Activated CD4-positive, alpha-beta T cell treated with anti-CD3 and anti-CD28 coated beads for 36 hours (primary cell): ENCODE measurements at regions of chr7 and their contacts with region 1.

Region 1: DNA sequence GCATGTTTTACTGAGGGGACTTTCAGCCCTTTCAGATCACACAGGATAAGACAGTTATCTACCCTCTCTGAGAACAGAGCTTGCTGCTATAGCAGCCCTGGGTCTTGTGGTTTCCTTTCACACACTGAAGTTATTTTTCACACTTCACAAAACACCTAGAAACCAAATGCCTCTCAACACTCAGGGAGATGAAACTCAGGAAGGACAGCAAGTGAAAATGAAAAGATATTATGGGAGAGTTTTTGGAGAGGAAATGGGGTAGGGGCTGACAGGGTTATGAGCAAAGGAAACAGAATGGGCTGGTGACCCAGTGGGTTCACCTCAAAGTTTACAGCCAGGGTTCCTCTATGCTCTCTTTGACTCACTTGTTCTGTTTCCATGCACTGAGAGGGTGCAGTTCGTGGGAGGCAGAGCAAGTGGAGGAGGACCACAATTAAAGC is 17.0 kb upstream of the GIMAP2 start:
- DNase-seq: peak; percentile 77
- ATAC-seq: peak; percentile 76
- H3K4me3 Mint-ChIP-seq: peak overlapping the region; percentile 28
- H3K27ac Mint-ChIP-seq: peak overlapping the region; percentile 94
- H3K4me1 Mint-ChIP-seq: peaks cover 89% of the 10 kb centered on the region
- H3K27me3 Mint-ChIP-seq: no peaks in the 10 kb centered on the region

Region 2: GRCh38 chr7:150567169-150567568 is 101.3 kb before region 1 on chr7 and contains the start of gene GIMAP4:
- CTCF ChIA-PET with region 1: interaction called, 4 read pairs
- POLR2A ChIA-PET with region 1: interaction called, 4 read pairs
- intact Hi-C with region 1: loop called in 1 of 2 experiments (anchors 5 kb)
- DNase-seq: peak; percentile 45
- ATAC-seq: peak; percentile 50
- H3K4me3 Mint-ChIP-seq: peak within 1 kb of the TSS; percentile 89
- H3K27ac Mint-ChIP-seq: peak within 1 kb of the TSS; percentile 99
- H3K4me1 Mint-ChIP-seq: peaks cover 67% of the 10 kb centered on the region
- H3K27me3 Mint-ChIP-seq: no peaks in the 10 kb centered on the region
- total RNA-seq, gene GIMAP4: 109 to 135 TPM

Region 3: GRCh38 chr7:150631866-150632864 is 36.3 kb before region 1 on chr7 and contains the start of gene GIMAP6:
- CTCF ChIA-PET with region 1: no interaction called
- POLR2A ChIA-PET with region 1: no interaction called
- intact Hi-C with region 1: loop called in 1 of 2 experiments (anchors 2 kb)
- DNase-seq: peak; percentile 62
- ATAC-seq: peak; percentile 69
- H3K4me3 Mint-ChIP-seq: peak within 1 kb of the TSS; percentile 95
- H3K27ac Mint-ChIP-seq: peak within 1 kb of the TSS; percentile 97
- H3K4me1 Mint-ChIP-seq: peaks cover 65% of the 10 kb centered on the region
- H3K27me3 Mint-ChIP-seq: no peaks in the 10 kb centered on the region
- total RNA-seq, gene GIMAP6: 21.6 to 25.4 TPM

Region 4: GRCh38 chr7:150685219-150686029 is 16.9 kb after region 1 on chr7 and contains the start of gene GIMAP2:
- CTCF ChIA-PET with region 1: interaction called, 3 read pairs
- POLR2A ChIA-PET with region 1: interaction called, 4 read pairs
- intact Hi-C with region 1: loop called in 1 of 2 experiments (anchors 2 kb)
- DNase-seq: peak; percentile 41
- ATAC-seq: peak; percentile 85
- H3K4me3 Mint-ChIP-seq: peak within 1 kb of the TSS; percentile 96
- H3K27ac Mint-ChIP-seq: peak within 1 kb of the TSS; percentile 100
- H3K4me1 Mint-ChIP-seq: peaks cover 75% of the 10 kb centered on the region
- H3K27me3 Mint-ChIP-seq: no peaks in the 10 kb centered on the region
- total RNA-seq, gene GIMAP2: 30.0 to 40.1 TPM

Region 5: GRCh38 chr7:151936207-151936606 is 1267.7 kb after region 1 on chr7:
- CTCF ChIA-PET with region 1: no interaction called
- POLR2A ChIA-PET with region 1: no interaction called
- intact Hi-C with region 1: no loop called
- DNase-seq: no peak
- ATAC-seq: peak; percentile 88
- H3K4me3 Mint-ChIP-seq: peak overlapping the region; percentile 43
- H3K27ac Mint-ChIP-seq: peak overlapping the region; percentile 84
- H3K4me1 Mint-ChIP-seq: peaks cover 23% of the 10 kb centered on the region
- H3K27me3 Mint-ChIP-seq: no peaks in the 10 kb centered on the region